ENCODE measurements at regions of chr3 and their contacts with region 1.

Region 1: GRCh38 chr3:101827211-101828174 is 21.8 kb upstream of the NFKBIZ start:
- DNase-seq: peak; percentile 59
- ATAC-seq: peak; percentile 95
- H3K4me3 ChIP-seq: peak overlapping the region; percentile 57 to 73 (median 59)
- H3K27ac ChIP-seq: peak overlapping the region; percentile 64
- H3K4me1 ChIP-seq: peaks cover 29% of the 10 kb centered on the region
- H3K27me3 ChIP-seq: no peaks in the 10 kb centered on the region
- CTCF ChIP-seq: no peak
- EP300 ChIP-seq: 0 out of 4 replicates have a peak, but pooled peaks of 1 of the 2 experiments have one; percentile 3
- POLR2A ChIP-seq: no peak; a peak in 2 of 4 replicates
- RAD21 ChIP-seq: no peak

Region 2: GRCh38 chr3:101625879-101626278 is 201.6 kb before region 1 on chr3:
- CTCF ChIA-PET with region 1: no interaction called
- POLR2A ChIA-PET with region 1: no interaction called
- in situ Hi-C with region 1: no loop called
- intact Hi-C with region 1: no loop called
- DNase-seq: no peak
- ATAC-seq: no peak
- H3K4me3 ChIP-seq: no peak overlapping the region
- H3K27ac ChIP-seq: no peak overlapping the region
- H3K4me1 ChIP-seq: no peaks in the 10 kb centered on the region
- H3K27me3 ChIP-seq: no peaks in the 10 kb centered on the region; a peak in 1 of 5 replicates
- CTCF ChIP-seq: no peak
- EP300 ChIP-seq: no peak
- POLR2A ChIP-seq: no peak
- RAD21 ChIP-seq: no peak

Region 3: GRCh38 chr3:101854621-101855304 is 27.3 kb after region 1 on chr3:
- CTCF ChIA-PET with region 1: no interaction called
- POLR2A ChIA-PET with region 1: interaction called, 32 read pairs
- in situ Hi-C with region 1: no loop called
- intact Hi-C with region 1: loop called (anchors 1 kb)
- DNase-seq: peak; percentile 35
- ATAC-seq: peak; percentile 14; the same call in 2 of the 3 replicates
- H3K4me3 ChIP-seq: no peak overlapping the region; a peak in 1 of 6 replicates
- H3K27ac ChIP-seq: no peak overlapping the region
- H3K4me1 ChIP-seq: peaks cover 62% of the 10 kb centered on the region
- H3K27me3 ChIP-seq: no peaks in the 10 kb centered on the region; a peak in 1 of 5 replicates
- CTCF ChIP-seq: no peak
- EP300 ChIP-seq: peak in 1 of 2 experiments; percentile 84; a peak in 2 of 4 replicates
- POLR2A ChIP-seq: no peak
- RAD21 ChIP-seq: no peak

Region 4: DNA sequence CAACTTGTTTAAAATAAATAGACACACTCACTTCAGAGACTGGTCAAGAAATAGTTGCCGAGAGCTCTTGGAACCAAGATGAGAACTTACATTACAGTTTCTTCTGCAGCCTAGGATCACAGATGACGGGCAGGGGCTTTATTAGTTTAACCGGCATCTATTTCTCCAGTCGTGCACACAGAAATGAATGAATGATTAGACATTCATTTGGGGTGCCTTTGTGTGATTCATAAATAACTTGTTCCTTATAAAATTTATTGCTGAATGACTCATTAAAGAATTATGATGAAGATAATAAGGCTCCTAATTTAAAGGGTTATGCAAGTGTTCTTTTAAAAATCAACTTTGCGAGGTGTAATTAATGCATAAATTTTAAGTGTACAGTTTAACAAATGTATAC is 42.6 kb after region 1 on chr3:
- CTCF ChIA-PET with region 1: no interaction called
- POLR2A ChIA-PET with region 1: no interaction called
- in situ Hi-C with region 1: no loop called
- intact Hi-C with region 1: no loop called
- DNase-seq: no peak
- ATAC-seq: no peak
- H3K4me3 ChIP-seq: no peak overlapping the region
- H3K27ac ChIP-seq: no peak overlapping the region
- H3K4me1 ChIP-seq: peaks cover 39% of the 10 kb centered on the region
- H3K27me3 ChIP-seq: no peaks in the 10 kb centered on the region; a peak in 1 of 5 replicates
- CTCF ChIP-seq: no peak
- EP300 ChIP-seq: no peak
- POLR2A ChIP-seq: no peak
- RAD21 ChIP-seq: no peak